ENCODE measurements at regions of chr3 and their contacts with region 1.

Region 1: GRCh38 chr3:38616111-38616510 is 33.4 kb downstream of the SCN5A start:
- DNase-seq: no peak
- ATAC-seq: peak; percentile 93

Region 2: GRCh38 chr3:38579551-38580449 is 36.3 kb before region 1 on chr3:
- intact Hi-C with region 1: loop called (anchors 2 kb)
- DNase-seq: peak; percentile 53
- ATAC-seq: peak; percentile 82